ENCODE measurements at regions of chr18 and their contacts with region 1.

Region 1: DNA sequence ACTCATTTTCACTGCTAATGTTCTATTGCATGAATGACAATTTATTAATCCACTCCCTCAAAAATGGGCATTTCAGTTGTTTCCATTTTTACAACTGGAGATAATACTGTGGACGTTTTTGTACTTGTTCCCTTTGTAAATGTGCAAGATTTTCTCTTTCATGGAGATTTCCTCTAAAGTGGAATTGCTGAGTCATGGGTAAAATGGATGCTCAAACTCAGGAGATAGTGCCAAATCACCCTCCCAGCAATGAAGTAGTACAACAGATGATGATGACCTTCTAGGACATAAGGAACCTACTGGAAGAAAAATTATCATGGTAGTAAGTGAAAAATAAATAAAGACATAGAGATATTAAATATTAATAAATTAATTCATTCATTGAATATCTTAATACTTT is 460.8 kb upstream of the CHST9 start:
- DNase-seq: no peak
- H3K4me3 ChIP-seq: no peak overlapping the region
- CTCF ChIP-seq: no peak
- POLR2A ChIP-seq: no peak

Region 2: GRCh38 chr18:27540111-27540510 is 105.8 kb before region 1 on chr18:
- intact Hi-C with region 1: loop called (anchors 5 kb)
- DNase-seq: no peak
- H3K4me3 ChIP-seq: no peak overlapping the region
- CTCF ChIP-seq: no peak
- POLR2A ChIP-seq: no peak

Region 3: DNA sequence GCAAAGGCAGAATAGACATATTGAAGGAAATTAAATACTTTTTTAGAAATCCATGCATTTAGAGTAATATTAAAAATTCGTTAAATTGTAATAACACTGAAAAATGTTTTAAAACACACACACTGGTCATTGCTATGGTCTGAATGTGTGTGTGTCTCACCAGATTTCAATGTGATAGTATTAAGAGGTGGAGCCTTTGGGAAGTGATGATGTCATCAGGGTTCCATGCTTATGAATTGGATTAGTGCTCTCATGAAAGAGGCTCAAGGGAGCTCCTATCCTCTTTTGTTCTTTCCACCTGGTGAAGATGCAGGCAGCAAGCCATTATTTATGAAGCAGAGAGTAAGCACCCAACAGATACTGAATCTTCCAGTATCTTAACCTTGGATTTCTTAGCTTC is 89.2 kb after region 1 on chr18:
- intact Hi-C with region 1: no loop called
- DNase-seq: no peak
- H3K4me3 ChIP-seq: no peak overlapping the region
- CTCF ChIP-seq: no peak
- POLR2A ChIP-seq: no peak